ENCODE measurements at regions of chr9 and their contacts with region 1.

Region 1: GRCh38 chr9:21110708-21111576 is 30.7 kb downstream of the IFNW1 start:
- DNase-seq: peak; percentile 52
- H3K4me3 ChIP-seq: no peak overlapping the region
- H3K27ac ChIP-seq: no peak overlapping the region
- H3K4me1 ChIP-seq: no peaks in the 10 kb centered on the region
- H3K27me3 ChIP-seq: no peaks in the 10 kb centered on the region
- CTCF ChIP-seq: peak; percentile 76 to 85

Region 2: DNA sequence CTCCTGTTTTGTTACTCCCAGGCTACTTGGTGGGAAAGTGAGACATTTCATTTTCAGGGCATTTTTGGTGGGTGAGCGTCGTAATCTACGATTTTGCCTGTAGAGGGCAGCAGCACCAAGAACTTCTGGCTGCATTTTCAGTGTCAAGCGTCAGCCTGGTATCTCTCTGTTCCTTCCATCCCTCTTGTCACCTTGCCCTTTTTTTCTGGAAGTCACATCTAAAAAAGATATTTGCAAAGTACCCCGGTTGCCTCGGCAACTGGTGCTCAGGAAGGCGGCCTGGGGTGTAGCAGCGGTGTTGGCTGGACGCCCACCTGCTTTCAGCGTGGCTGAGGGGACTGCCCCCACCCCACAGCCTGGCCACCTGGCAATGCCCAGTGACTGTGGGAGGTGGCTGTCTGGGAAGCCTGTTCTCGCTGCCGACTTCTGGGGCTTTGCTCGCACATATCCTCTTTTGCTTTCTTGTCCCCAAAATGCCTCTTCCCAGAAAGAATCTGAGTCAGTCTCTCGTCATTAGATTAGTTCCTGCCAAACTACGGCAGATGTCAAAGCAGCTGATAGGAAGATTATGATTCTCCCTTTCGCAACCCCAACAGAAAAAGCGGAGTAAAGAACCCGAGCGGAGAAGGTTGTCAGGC is 1617.6 kb before region 1 on chr9:
- CTCF ChIA-PET with region 1: no interaction called
- dilution Hi-C with region 1: no loop called
- in situ Hi-C with region 1: loop called in 1 of 2 experiments (anchors 25 kb)
- intact Hi-C with region 1: loop called (anchors 10 kb)
- DNase-seq: peak; percentile 52
- H3K4me3 ChIP-seq: peak overlapping the region; percentile 4 to 37 (median 32)
- H3K27ac ChIP-seq: no peak overlapping the region
- H3K4me1 ChIP-seq: peaks cover 4% of the 10 kb centered on the region
- H3K27me3 ChIP-seq: no peaks in the 10 kb centered on the region
- CTCF ChIP-seq: peak; percentile 77 to 83

Region 3: DNA sequence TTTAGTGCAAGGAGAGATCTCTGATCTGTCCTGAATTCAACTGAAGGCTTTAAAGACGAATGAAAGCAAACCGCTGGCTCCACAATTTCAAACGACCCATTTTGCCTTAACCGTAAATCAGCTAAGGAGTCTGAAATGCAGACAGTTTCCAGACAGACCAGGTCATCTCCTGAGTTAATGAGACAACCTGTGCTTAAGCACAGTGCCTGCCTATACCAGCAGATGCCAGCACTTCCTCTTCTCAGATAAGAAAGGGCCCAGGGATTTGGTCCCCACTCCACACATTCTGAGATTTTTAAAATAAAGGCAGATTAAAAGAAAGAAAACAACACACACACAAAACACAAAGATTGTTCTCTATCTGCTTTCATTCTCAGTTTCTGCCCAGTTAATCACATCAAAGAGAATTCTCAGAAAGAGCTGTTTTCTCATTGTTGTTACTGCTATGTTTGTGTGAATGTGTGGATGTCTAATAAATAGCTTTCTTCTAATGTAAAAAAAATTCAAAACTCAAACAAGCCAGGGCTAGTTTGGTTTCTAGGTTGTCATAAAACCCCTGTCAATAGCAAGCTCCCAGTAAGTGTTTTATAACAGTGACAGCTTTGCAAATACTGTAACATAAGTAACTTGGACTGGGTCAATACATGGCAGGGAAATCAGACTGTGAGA is 1164.4 kb before region 1 on chr9:
- CTCF ChIA-PET with region 1: no interaction called
- dilution Hi-C with region 1: no loop called
- in situ Hi-C with region 1: no loop called
- intact Hi-C with region 1: loop called (anchors 5 kb)
- DNase-seq: peak; percentile 32
- H3K4me3 ChIP-seq: no peak overlapping the region
- H3K27ac ChIP-seq: no peak overlapping the region
- H3K4me1 ChIP-seq: peaks cover 2% of the 10 kb centered on the region
- H3K27me3 ChIP-seq: no peaks in the 10 kb centered on the region
- CTCF ChIP-seq: peak; percentile 55 to 75

Region 4: DNA sequence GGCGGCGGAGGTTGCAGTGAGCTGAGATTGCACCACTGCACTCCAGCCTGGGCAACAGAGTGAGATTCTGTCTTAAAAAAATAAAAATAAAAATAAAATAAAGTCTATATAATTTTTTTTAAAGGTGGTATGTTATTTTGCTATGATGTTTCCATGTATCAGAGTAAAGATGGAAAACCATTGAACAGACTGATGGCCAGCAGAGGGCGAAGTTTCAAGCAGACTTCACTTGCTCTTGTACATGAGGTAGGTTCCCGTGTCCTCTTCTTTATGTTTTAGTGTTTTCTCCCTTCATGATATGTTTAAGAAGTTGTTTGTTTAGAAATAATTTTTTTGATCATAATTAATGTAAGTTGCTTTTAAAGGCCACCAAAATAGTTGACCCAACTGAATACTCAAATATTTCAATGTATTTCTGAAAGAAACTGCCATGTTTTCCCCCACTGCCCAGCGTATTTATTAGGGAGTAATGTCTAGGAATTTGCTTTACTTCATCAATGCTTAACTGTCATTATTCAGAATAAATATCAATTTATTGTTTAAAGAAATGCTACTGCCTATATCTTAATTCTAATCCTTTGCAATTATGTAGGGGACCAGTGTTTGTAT is 225.9 kb before region 1 on chr9:
- CTCF ChIA-PET with region 1: interaction called, 5 read pairs
- dilution Hi-C with region 1: no loop called
- in situ Hi-C with region 1: no loop called
- intact Hi-C with region 1: loop called (anchors 1 kb)
- DNase-seq: peak; percentile 37
- H3K4me3 ChIP-seq: no peak overlapping the region
- H3K27ac ChIP-seq: no peak overlapping the region
- H3K4me1 ChIP-seq: no peaks in the 10 kb centered on the region
- H3K27me3 ChIP-seq: no peaks in the 10 kb centered on the region
- CTCF ChIP-seq: peak; percentile 57 to 73

Region 5: GRCh38 chr9:20906326-20906725 is 204.6 kb before region 1 on chr9:
- CTCF ChIA-PET with region 1: no interaction called
- dilution Hi-C with region 1: no loop called
- in situ Hi-C with region 1: loop called in 1 of 2 experiments (anchors 25 kb)
- intact Hi-C with region 1: no loop called
- DNase-seq: no peak
- H3K4me3 ChIP-seq: no peak overlapping the region
- H3K27ac ChIP-seq: no peak overlapping the region
- H3K4me1 ChIP-seq: no peaks in the 10 kb centered on the region
- H3K27me3 ChIP-seq: no peaks in the 10 kb centered on the region
- CTCF ChIP-seq: no peak

Region 6: DNA sequence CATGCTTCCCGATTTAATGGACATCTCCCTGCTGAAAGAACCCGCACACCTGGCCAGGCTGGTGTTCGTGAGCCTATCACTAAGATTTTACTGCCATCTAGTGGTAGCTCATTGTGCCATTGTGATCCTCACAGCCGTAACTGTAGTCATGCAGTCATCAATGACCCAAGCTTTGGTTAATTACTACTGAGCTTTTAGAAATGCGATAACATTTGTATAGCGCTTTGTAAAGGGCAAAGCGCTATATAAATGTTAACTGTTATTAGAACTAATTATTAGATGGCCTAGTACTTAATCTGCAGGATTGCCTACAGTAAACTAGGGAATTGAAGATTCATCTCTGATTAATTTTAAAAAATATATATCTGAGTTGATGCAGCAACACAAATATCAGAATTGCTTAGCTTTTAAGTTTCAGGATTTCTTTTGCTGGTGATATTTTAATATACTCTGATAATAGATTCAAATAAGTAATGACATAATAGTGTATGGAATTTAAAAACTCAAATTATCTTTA is 169.7 kb before region 1 on chr9:
- CTCF ChIA-PET with region 1: no interaction called
- dilution Hi-C with region 1: no loop called
- in situ Hi-C with region 1: no loop called
- intact Hi-C with region 1: loop called (anchors 1 kb)
- DNase-seq: peak; percentile 66
- H3K4me3 ChIP-seq: no peak overlapping the region
- H3K27ac ChIP-seq: no peak overlapping the region
- H3K4me1 ChIP-seq: no peaks in the 10 kb centered on the region
- H3K27me3 ChIP-seq: no peaks in the 10 kb centered on the region
- CTCF ChIP-seq: peak; percentile 79 to 81

Region 7: DNA sequence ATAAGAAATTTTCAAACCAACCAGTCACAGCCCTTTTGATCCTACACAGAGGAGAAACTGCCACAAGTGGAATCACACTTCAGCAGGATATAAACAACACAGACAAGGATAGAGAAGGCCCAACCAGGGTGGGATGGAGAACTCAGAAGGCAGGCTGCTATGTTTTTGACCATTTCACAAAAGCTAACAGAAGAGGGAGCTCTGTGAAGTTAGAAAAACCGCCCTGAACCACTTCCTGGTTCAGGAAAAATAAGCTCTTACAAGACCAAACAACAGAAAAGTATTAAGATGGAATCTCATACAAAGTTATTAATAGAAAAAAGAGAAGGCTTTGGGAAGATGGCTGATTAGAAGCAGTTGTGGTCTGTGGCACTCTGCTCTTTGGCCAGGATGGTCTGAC is 32.2 kb before region 1 on chr9:
- CTCF ChIA-PET with region 1: interaction called, 11 read pairs
- dilution Hi-C with region 1: no loop called
- in situ Hi-C with region 1: no loop called
- intact Hi-C with region 1: loop called (anchors 1 kb)
- DNase-seq: no peak
- H3K4me3 ChIP-seq: no peak overlapping the region
- H3K27ac ChIP-seq: no peak overlapping the region
- H3K4me1 ChIP-seq: no peaks in the 10 kb centered on the region
- H3K27me3 ChIP-seq: peaks cover 12% of the 10 kb centered on the region
- CTCF ChIP-seq: peak in 1 of 2 donors; percentile 12